A673 (cell line): ENCODE measurements at regions of chr16 and their contacts with region 1.

Region 1: GRCh38 chr16:25838724-25839186 is 147.0 kb downstream of the HS3ST4 start:
- DNase-seq: peak; percentile 90
- H3K4me3 ChIP-seq: peak overlapping the region; percentile 29
- H3K27ac ChIP-seq: peak overlapping the region; percentile 2
- H3K4me1 ChIP-seq: peaks cover 38% of the 10 kb centered on the region
- H3K27me3 ChIP-seq: no peaks in the 10 kb centered on the region
- CTCF ChIP-seq: peak; percentile 81

Region 2: GRCh38 chr16:26569793-26570192 is 731.0 kb after region 1 on chr16:
- CTCF ChIA-PET with region 1: interaction called, 3 read pairs
- POLR2A ChIA-PET with region 1: no interaction called
- intact Hi-C with region 1: loop called (anchors 5 kb)
- DNase-seq: peak; percentile 50
- H3K4me3 ChIP-seq: no peak overlapping the region
- H3K27ac ChIP-seq: no peak overlapping the region
- H3K4me1 ChIP-seq: no peaks in the 10 kb centered on the region
- H3K27me3 ChIP-seq: no peaks in the 10 kb centered on the region
- CTCF ChIP-seq: peak; percentile 65